Activated CD4-positive, alpha-beta memory T cell treated with anti-CD3 and anti-CD28 coated beads for 36 hours (primary cell): ENCODE measurements at regions of chr2 and their contacts with region 1.

Region 1: DNA sequence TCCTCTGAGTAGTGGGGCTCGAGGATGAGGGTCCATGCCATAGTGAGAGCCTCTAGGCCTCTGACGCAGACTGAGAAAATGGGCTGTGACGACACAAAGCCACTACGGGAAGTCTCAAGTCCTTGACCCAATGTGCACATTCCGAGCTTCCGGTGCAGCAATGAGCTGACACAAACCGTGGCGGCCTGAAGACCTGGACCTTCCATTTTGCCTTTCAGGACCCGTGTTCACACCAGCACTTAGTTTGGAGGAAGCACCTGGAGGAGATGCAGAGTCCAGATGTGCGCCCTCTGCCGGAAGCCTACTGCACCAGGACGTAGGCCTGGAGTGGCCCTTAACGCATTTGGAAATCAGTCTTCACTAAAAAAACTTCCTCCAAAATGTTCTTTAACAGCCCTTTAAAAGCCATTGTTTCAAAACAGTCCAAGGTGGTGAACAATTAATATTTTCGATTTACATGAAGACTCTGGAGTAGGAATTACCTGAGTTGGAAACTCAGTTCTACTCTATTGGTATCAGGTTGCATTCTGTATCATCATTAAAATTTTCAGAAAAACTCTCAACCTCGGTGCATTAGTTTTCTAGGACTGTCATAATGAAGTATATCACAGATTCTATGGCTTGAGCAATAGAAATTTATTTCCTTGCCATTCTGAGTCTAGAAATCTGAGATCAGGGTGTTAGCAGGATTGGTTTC is 33.9 kb downstream of the BMP10 start:
- DNase-seq: peak; percentile 77
- H3K4me3 Mint-ChIP-seq: no peak overlapping the region
- H3K27ac Mint-ChIP-seq: peak overlapping the region; percentile 63
- H3K4me1 Mint-ChIP-seq: peaks cover 47% of the 10 kb centered on the region
- H3K27me3 Mint-ChIP-seq: no peaks in the 10 kb centered on the region

Region 2: DNA sequence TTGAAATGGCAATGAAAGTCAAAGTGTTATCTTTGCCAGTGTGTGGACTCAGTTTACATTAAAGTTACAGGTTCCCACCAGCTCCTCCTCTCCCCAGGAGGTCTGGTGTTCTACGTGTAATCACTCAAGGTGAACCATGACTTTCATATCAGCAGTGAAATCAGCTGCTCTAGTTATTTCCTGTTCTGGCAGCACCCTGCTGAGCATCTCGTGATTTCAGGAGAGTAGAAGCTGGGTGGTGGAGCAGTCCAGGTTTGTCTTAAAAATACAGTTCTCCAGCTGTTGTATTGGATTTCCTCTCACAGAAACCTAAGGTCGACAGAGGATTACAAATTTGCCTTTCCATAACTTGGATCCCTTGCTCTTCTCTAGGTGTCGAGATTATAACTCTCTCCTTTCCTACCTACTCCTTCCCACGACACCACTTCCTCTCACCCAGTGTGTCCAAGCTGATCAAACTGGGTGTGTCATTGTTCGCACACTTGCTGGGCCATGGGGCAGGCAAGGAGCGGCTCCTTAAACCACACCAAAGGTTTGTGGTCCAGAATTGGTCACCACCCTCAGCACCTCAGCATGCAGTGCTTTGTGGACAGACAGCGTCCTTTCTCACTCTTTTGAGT is 115.7 kb before region 1 on chr2:
- CTCF ChIA-PET with region 1: interaction called, 16 read pairs
- POLR2A ChIA-PET with region 1: interaction called, 3 read pairs
- intact Hi-C with region 1: loop called (anchors 1 kb)
- DNase-seq: peak; percentile 62
- H3K4me3 Mint-ChIP-seq: peak overlapping the region; percentile 61
- H3K27ac Mint-ChIP-seq: peak overlapping the region; percentile 85
- H3K4me1 Mint-ChIP-seq: peaks cover 90% of the 10 kb centered on the region
- H3K27me3 Mint-ChIP-seq: no peaks in the 10 kb centered on the region

Region 3: DNA sequence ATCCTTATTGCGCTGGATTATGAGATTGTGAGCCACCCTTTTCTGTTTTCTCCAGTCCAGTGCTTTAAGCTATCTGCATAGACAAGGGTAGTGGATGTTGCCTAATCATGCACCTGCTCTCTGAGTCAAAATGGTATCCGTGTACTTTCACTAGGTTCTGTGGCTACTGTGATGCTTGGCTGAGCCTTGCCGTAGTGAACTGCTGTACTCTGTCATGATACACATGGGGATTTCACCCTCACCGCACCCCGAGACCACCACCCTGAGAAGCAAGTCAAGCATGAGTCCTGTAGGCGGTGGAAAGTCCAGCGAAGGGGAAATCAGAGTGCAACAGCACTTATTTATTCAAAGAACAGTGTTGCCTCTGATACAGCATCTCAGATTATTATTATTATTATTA is 47.7 kb before region 1 on chr2:
- CTCF ChIA-PET with region 1: interaction called, 3 read pairs
- POLR2A ChIA-PET with region 1: no interaction called
- intact Hi-C with region 1: loop called (anchors 1 kb)
- DNase-seq: peak; percentile 83
- H3K4me3 Mint-ChIP-seq: no peak overlapping the region
- H3K27ac Mint-ChIP-seq: peak overlapping the region; percentile 25
- H3K4me1 Mint-ChIP-seq: peaks cover 53% of the 10 kb centered on the region
- H3K27me3 Mint-ChIP-seq: no peaks in the 10 kb centered on the region

Region 4: GRCh38 chr2:68849579-68850030 is 12.3 kb after region 1 on chr2:
- CTCF ChIA-PET with region 1: interaction called, 10 read pairs
- POLR2A ChIA-PET with region 1: no interaction called
- intact Hi-C with region 1: no loop called
- DNase-seq: no peak
- H3K4me3 Mint-ChIP-seq: no peak overlapping the region
- H3K27ac Mint-ChIP-seq: no peak overlapping the region
- H3K4me1 Mint-ChIP-seq: no peaks in the 10 kb centered on the region
- H3K27me3 Mint-ChIP-seq: peaks cover 14% of the 10 kb centered on the region